Activated CD4-positive, alpha-beta T cell treated with anti-CD3 and anti-CD28 coated beads, Interleukin-2, amount 10 ng/mL, durations not matched to agents 7 days and 5 days (primary cell): ENCODE measurements at regions of chr1 and their contacts with region 1.

Region 1: GRCh38 chr1:6464514-6464836 is 1.5 kb downstream of the TNFRSF25 start:
- DNase-seq: peak; percentile 42
- H3K4me3 Mint-ChIP-seq: peak overlapping the region; percentile 79
- H3K27ac Mint-ChIP-seq: peak overlapping the region; percentile 71
- H3K4me1 Mint-ChIP-seq: peaks cover 61% of the 10 kb centered on the region
- H3K27me3 Mint-ChIP-seq: no peaks in the 10 kb centered on the region

Region 2: DNA sequence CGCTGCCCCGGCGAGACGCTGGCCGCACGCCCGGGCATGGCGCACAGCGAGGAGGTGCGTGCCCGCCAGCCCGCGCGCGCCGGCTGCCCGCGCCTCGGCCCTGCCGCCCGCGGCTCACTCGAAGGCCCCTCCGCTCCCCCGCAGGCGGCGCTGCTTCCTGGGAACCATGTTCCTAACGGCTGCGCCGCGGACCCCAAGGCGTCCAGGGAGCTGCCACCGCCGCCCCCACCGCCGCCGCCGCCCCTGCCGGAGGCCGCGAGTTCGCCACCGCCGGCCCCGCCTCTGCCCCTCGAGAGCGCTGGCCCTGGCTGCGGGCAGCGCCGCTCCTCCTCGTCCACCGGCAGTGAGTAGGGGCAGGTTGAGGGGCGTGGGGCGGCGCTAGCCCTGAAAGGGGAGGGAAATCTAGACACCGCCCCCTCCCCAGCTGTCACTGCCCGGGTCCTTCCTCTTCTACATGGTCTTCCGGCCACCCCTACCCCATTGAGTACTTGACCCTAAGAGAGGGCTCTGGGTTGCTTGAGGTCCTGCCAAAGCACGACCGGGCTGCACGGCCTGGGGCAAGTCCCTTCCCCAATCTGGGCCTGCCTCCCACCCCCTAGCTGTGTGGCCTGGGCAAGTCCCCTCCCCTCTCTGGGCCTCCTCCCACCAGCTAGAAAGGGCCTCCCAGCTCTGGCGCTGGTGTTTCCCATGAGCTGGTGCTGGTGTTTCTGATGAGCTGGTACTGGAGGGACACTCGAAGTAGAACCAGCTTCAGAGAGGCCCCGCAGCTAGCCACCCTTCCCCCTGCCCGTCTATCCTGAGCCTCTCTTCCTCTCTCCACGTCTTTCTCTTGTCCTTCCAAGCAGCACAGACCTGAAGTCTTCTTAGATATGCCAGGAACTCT is 15.5 kb before region 1 on chr1:
- CTCF ChIA-PET with region 1: interaction called, 11 read pairs
- POLR2A ChIA-PET with region 1: no interaction called
- DNase-seq: no peak
- H3K4me3 Mint-ChIP-seq: no peak overlapping the region
- H3K27ac Mint-ChIP-seq: no peak overlapping the region
- H3K4me1 Mint-ChIP-seq: peaks cover 20% of the 10 kb centered on the region
- H3K27me3 Mint-ChIP-seq: peaks cover 58% of the 10 kb centered on the region